ENCODE measurements at regions of chr4 and their contacts with region 1.

Region 1: GRCh38 chr4:69881173-69881773 is 21.3 kb upstream of the SULT1E1 start:
- DNase-seq: no peak

Region 2: DNA sequence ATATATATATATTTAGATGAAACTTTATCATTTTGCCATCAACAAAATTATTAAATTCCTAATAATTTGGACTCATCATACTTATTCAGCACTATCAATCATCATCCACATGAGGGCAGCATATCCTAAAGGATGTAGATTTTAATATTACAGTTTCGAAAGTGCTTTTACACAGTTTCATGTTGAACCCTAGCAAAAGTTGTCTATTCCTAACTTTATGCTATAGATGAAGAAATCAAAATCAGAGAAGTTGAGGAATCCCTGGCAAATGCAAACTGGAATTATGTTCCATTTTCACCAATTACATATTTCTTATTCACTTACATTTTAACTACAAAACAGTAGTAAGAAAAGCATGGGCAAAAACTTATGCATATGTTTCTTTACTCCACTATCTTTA is 191.7 kb before region 1 on chr4:
- intact Hi-C with region 1: loop called (anchors 5 kb)
- DNase-seq: no peak

Region 3: DNA sequence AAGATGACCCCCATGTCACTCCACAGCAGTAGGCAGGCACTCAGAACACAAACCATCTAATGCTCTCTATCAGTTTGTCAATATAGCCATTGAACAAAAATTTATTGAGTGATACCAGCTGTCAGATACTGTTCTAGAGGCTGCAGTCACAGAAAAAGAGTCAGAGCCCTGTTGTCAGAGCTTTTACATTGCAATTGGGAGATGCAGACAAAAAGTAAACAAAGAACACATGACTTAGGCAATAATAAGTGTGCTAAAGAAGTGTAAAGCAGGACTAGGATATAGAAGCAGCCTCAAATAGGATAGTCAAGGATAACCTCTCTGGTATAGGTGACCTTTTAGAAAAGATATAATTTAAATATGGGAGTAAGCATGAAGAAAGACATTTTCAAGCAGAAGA is 177.9 kb after region 1 on chr4:
- intact Hi-C with region 1: no loop called
- DNase-seq: no peak